Activated CD4-positive, alpha-beta T cell treated with anti-CD3 and anti-CD28 coated beads for 36 hours (primary cell): ENCODE measurements at regions of chr1 and their contacts with region 1.

Region 1: GRCh38 chr1:31789259-31790065 is 25.3 kb upstream of the ADGRB2 start:
- DNase-seq: peak; percentile 99
- ATAC-seq: peak; percentile 85
- H3K4me3 Mint-ChIP-seq: peak overlapping the region; percentile 75
- H3K27ac Mint-ChIP-seq: no peak overlapping the region
- H3K4me1 Mint-ChIP-seq: peaks cover 10% of the 10 kb centered on the region
- H3K27me3 Mint-ChIP-seq: no peaks in the 10 kb centered on the region

Region 2: GRCh38 chr1:31296486-31297276 is 492.8 kb before region 1 on chr1 and contains the starts of genes SNRNP40 and ZCCHC17:
- CTCF ChIA-PET with region 1: no interaction called
- POLR2A ChIA-PET with region 1: no interaction called
- intact Hi-C with region 1: loop called in 1 of 2 experiments (anchors 2 kb)
- DNase-seq: peak; percentile 94
- ATAC-seq: peak; percentile 98
- H3K4me3 Mint-ChIP-seq: no peak within 1 kb of the TSS
- H3K27ac Mint-ChIP-seq: no peak within 1 kb of the TSS
- H3K4me1 Mint-ChIP-seq: peaks cover 34% of the 10 kb centered on the region
- H3K27me3 Mint-ChIP-seq: no peaks in the 10 kb centered on the region
- total RNA-seq, gene SNRNP40: 101 to 111 TPM
- total RNA-seq, gene ZCCHC17: 23.9 to 28.8 TPM

Region 3: DNA sequence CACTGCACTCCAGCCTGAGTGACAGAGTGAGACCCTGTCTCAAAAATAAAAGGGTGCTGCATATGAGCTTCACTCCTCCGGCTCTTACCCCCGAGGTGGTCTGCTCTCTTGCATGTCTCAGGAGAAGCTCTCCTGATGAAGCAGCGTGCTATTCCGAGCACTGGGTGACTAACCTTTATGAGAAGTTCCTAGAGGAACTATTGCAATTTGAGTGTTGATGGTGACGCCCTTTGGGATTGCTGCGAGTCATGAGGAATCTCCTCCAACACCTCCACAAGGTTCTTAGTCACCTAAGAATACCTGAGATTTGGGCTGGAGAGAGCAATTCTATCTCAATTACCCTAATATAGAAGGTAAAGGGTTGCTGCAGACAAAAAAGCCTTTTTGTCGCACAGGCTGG is 253.9 kb before region 1 on chr1:
- CTCF ChIA-PET with region 1: no interaction called
- POLR2A ChIA-PET with region 1: no interaction called
- intact Hi-C with region 1: no loop called
- DNase-seq: no peak
- ATAC-seq: no peak
- H3K4me3 Mint-ChIP-seq: no peak overlapping the region
- H3K27ac Mint-ChIP-seq: no peak overlapping the region
- H3K4me1 Mint-ChIP-seq: peaks cover 8% of the 10 kb centered on the region
- H3K27me3 Mint-ChIP-seq: peaks cover 8% of the 10 kb centered on the region

Region 4: GRCh38 chr1:31564134-31564989 is 225.1 kb before region 1 on chr1:
- CTCF ChIA-PET with region 1: interaction called, 4 read pairs
- POLR2A ChIA-PET with region 1: no interaction called
- intact Hi-C with region 1: loop called (anchors 1 to 2 kb)
- DNase-seq: peak; percentile 67
- ATAC-seq: no peak
- H3K4me3 Mint-ChIP-seq: no peak overlapping the region
- H3K27ac Mint-ChIP-seq: no peak overlapping the region
- H3K4me1 Mint-ChIP-seq: no peaks in the 10 kb centered on the region
- H3K27me3 Mint-ChIP-seq: peaks cover 9% of the 10 kb centered on the region

Region 5: GRCh38 chr1:31705080-31705866 is 84.2 kb before region 1 on chr1:
- CTCF ChIA-PET with region 1: interaction called, 4 read pairs
- POLR2A ChIA-PET with region 1: no interaction called
- intact Hi-C with region 1: loop called in 1 of 2 experiments (anchors 2 kb)
- DNase-seq: peak; percentile 88
- ATAC-seq: peak; percentile 88
- H3K4me3 Mint-ChIP-seq: no peak overlapping the region
- H3K27ac Mint-ChIP-seq: peak overlapping the region; percentile 38
- H3K4me1 Mint-ChIP-seq: peaks cover 34% of the 10 kb centered on the region
- H3K27me3 Mint-ChIP-seq: peaks cover 37% of the 10 kb centered on the region

Region 6: DNA sequence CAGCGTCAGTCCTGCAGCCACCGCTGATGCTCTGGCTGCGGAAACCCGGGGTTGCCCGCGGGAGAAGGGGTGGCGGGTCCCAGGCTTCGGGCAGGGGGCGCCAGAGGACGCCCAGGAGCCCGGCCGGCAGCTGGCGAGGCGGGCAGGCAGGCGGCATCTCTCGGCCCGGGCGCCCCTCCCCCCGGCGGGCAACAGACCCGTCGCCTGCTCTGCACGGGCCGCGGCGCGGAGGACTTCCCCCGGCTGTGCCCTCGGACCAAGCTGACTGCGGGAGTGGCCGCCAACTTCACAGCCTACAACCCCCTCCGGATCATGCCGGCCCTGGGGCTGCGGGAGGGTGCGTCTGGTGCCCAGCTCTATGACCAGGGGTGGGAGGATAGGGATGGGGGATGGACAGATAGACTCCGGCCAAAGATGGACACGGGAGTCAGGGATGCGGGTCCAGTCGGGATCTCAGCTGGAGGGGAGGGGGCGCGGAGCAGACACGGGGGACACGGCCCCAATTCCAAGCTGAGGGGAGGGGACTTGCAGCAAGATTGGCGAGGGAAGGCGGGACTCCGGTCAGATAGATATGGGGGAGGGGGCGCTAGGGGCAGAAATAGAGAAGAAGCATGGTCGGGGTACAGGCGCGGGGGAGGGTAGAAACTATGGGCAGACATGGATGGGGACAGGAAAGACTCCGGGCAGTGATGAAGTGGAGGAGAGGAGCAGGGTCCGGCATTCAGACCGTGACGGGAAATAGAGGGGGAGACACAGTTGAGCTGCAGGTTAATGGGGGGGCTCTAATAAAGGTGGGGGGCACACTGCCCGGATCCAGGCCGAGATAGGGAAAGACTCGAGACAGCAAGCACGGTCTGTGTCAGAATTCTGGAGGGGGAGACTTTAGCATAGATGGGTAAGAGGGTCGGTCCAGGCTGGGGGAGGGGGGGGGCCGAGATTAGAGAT is 26.5 kb before region 1 on chr1:
- CTCF ChIA-PET with region 1: interaction called, 30 read pairs
- POLR2A ChIA-PET with region 1: interaction called, 8 read pairs
- intact Hi-C with region 1: loop called (anchors 1 kb)
- DNase-seq: peak; percentile 87
- ATAC-seq: peak; percentile 65
- H3K4me3 Mint-ChIP-seq: peak overlapping the region; percentile 65
- H3K27ac Mint-ChIP-seq: no peak overlapping the region
- H3K4me1 Mint-ChIP-seq: peaks cover 26% of the 10 kb centered on the region
- H3K27me3 Mint-ChIP-seq: peaks cover 15% of the 10 kb centered on the region

Region 7: DNA sequence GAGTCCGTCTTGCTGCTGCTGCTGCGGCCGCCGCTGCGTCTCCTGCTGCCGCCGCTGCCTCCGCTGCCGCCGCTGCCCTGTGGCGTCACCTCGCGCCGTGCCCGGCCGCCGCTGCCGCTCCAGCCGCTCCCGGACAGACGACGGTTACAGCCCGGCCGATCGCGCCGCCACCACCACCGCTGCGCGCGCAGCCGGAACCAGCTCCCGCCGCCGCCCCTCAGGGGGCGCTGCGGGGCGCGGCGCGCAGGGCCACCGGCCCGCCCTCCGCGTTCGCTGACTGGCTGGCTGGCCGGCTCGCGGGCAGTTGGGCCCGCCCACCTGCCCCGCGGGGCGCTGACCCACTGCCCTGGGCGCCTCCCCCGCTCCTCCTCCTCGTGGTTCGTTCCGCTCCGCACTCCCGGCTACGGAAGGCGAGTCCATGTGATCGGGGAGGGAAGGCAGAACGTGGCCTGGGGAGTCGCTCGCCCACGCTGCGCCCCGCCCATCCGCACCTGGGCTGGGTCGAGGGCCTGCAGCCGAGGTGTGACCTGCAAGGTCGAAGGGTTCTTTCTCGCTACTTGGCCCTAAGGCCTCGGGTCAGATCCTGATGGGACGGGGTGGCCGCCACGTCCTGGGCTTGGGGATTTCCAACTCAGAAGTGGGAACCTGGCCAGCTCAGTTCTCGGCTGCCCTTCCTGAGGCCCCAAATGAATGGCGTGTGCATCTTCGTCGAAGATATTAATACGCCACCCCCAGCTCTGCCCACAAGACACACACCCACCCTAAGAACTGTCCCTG is 148.9 kb after region 1 on chr1 and contains the start of gene PTP4A2:
- CTCF ChIA-PET with region 1: no interaction called
- POLR2A ChIA-PET with region 1: no interaction called
- intact Hi-C with region 1: loop called in 1 of 2 experiments (anchors 1 kb)
- DNase-seq: peak; percentile 93
- ATAC-seq: peak; percentile 63
- H3K4me3 Mint-ChIP-seq: peak within 1 kb of the TSS; percentile 91
- H3K27ac Mint-ChIP-seq: peak within 1 kb of the TSS; percentile 99
- H3K4me1 Mint-ChIP-seq: peaks cover 63% of the 10 kb centered on the region
- H3K27me3 Mint-ChIP-seq: no peaks in the 10 kb centered on the region
- total RNA-seq, gene PTP4A2: 279 to 314 TPM

Region 8: DNA sequence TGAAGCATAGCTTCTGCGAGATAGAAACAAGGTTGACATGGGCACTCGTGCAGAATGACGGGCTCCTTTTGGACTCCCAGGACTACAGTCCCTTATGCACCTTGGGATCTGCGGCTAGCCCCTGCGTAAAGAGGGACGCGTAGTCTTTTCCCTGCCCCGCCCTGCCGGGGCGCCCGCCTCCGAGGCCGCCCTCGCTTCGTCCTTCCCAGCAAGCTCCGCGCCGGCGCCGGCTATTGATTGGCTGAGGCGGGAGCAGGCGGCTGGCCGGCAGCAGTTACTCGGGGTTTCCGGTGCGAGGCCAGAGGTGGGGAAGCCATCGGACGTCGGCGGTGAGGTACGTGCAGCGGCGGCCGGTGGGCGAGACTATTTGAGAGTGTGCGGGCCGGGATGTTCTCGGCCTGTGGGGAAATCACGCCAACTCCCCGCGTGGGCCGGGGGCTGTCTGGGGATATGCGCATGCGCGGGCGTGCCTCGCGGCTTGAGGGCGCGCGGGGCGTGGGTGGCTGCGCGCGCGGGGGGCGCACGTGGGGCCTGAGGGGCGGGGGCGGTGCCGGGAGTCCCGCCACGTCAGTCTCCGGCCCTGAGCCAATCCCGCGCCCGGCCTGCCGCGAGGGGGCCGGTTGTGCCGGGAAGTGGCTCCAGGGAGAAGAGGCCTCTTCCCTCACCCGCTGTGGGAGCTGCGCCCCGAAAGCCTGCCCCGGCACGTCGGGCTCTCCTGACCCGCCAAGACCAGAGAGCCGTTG is 390.2 kb after region 1 on chr1 and contains the start of gene TXLNA:
- CTCF ChIA-PET with region 1: no interaction called
- POLR2A ChIA-PET with region 1: no interaction called
- intact Hi-C with region 1: loop called in 1 of 2 experiments (anchors 2 kb)
- DNase-seq: peak; percentile 96
- ATAC-seq: peak; percentile 93
- H3K4me3 Mint-ChIP-seq: peak within 1 kb of the TSS; percentile 86
- H3K27ac Mint-ChIP-seq: peak within 1 kb of the TSS; percentile 98
- H3K4me1 Mint-ChIP-seq: peaks cover 44% of the 10 kb centered on the region
- H3K27me3 Mint-ChIP-seq: no peaks in the 10 kb centered on the region
- total RNA-seq, gene TXLNA: 79.5 to 79.7 TPM